IMR-90 (cell line): ENCODE measurements at regions of chr3 and their contacts with region 1.

Region 1: GRCh38 chr3:68127718-68128117 is 473.3 kb upstream of the SUCLG2 start:
- DNase-seq: no peak
- ATAC-seq: no peak
- H3K4me3 ChIP-seq: no peak overlapping the region
- H3K27ac ChIP-seq: no peak overlapping the region
- H3K4me1 ChIP-seq: no peaks in the 10 kb centered on the region
- H3K27me3 ChIP-seq: no peaks in the 10 kb centered on the region
- CTCF ChIP-seq: no peak
- POLR2A ChIP-seq: no peak
- RAD21 ChIP-seq: no peak

Region 2: DNA sequence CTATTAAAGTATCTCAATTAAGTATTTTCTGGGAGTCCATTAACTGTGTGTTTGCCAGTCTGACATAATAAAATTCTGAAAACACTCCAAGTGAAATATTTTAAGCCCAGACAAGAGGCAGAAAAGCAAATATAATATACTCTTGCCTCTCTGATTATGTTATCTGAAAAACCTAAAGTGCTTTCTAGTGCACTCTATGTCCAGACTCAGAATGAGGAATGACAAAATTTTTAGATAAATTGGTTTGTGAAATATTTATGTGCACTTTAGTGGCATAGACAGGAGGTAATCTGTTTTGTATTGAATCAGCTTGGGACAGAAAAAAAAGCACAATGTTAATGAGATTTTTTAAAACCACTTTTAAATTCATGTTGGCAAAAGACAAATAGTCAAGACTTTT is 34.9 kb after region 1 on chr3:
- CTCF ChIA-PET with region 1: no interaction called
- POLR2A ChIA-PET with region 1: no interaction called
- dilution Hi-C with region 1: no loop called
- in situ Hi-C with region 1: no loop called
- intact Hi-C with region 1: loop called (anchors 1 kb)
- DNase-seq: no peak
- ATAC-seq: no peak
- H3K4me3 ChIP-seq: no peak overlapping the region
- H3K27ac ChIP-seq: no peak overlapping the region
- H3K4me1 ChIP-seq: no peaks in the 10 kb centered on the region
- H3K27me3 ChIP-seq: no peaks in the 10 kb centered on the region
- CTCF ChIP-seq: no peak
- POLR2A ChIP-seq: no peak
- RAD21 ChIP-seq: no peak